ENCODE measurements at regions of chr6 and their contacts with region 1.

Region 1: GRCh38 chr6:149863697-149864577 is at the start of gene LRP11:
- DNase-seq: peak; percentile 93
- H3K4me3 ChIP-seq: peak within 1 kb of the TSS; percentile 74 to 75
- H3K27ac ChIP-seq: peak within 1 kb of the TSS; percentile 76 to 91
- H3K4me1 ChIP-seq: peaks cover 10 to 14% of the 10 kb centered on the region in 2 experiments; a peak in 2 of 4 replicates
- H3K27me3 ChIP-seq: no peaks in the 10 kb centered on the region
- CTCF ChIP-seq: no peak
- EP300 ChIP-seq: no peak
- RAD21 ChIP-seq: no peak
- polyA plus RNA-seq, gene LRP11: 25.0 and 29.5 TPM in 2 replicates

Region 2: GRCh38 chr6:149834513-149835481 is 29.1 kb before region 1 on chr6:
- CTCF ChIA-PET with region 1: interaction called, 34 read pairs
- POLR2A ChIA-PET with region 1: no interaction called
- DNase-seq: peak; percentile 62
- H3K4me3 ChIP-seq: peak overlapping the region in 1 of 2 experiments; percentile 9; a peak in 1 of 4 replicates
- H3K27ac ChIP-seq: no peak overlapping the region
- H3K4me1 ChIP-seq: peaks cover 0 to 3% of the 10 kb centered on the region in 2 experiments; a peak in 2 of 4 replicates
- H3K27me3 ChIP-seq: no peaks in the 10 kb centered on the region
- CTCF ChIP-seq: peak; percentile 90
- EP300 ChIP-seq: no peak
- RAD21 ChIP-seq: peak; percentile 93

Region 3: DNA sequence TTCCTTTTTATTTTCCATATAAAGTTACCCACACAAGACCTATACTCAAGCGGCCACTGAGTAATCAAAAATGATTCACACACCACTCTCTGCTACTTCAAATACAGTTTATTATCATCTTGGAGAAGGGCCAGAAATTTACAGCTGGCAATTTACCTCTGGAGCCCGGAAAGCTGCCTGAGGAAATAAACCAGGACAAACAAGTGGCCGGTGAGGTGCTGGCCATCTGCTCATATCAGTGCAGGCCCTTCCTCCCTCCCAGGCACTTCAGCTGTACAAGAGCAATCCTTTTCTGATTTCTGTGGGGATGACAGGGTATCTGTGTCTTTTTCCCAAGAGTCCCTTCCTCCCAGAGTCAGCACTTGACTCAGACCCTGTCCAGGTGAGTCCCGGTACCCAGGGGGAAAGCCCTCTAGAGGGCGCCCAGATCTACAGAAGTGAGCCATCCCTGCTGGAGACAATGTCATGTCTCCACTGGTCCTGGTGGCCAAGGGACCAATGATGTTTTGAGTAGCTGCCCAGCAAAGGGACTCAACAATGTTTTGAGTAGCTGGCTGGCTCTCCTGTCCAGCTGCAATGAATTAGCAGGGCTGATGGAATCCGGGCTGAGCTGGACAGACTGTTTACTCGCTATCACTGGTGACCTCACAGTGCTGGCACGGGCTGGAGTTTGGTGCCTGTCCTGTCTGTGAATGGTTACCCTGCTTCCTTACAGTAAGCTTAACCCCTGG is 23.4 kb before region 1 on chr6:
- CTCF ChIA-PET with region 1: interaction called, 34 read pairs
- POLR2A ChIA-PET with region 1: interaction called, 8 read pairs
- DNase-seq: peak; percentile 76
- H3K4me3 ChIP-seq: no peak overlapping the region
- H3K27ac ChIP-seq: peak overlapping the region; percentile 56 to 92
- H3K4me1 ChIP-seq: peaks cover 15 to 42% of the 10 kb centered on the region in 2 experiments; a peak in 3 of 4 replicates
- H3K27me3 ChIP-seq: no peaks in the 10 kb centered on the region
- CTCF ChIP-seq: peak; percentile 64
- EP300 ChIP-seq: peak; percentile 28 to 50; a peak in 3 of 4 replicates
- RAD21 ChIP-seq: peak; percentile 56

Region 4: GRCh38 chr6:149847936-149848267 is 16.0 kb before region 1 on chr6:
- CTCF ChIA-PET with region 1: interaction called, 13 read pairs
- POLR2A ChIA-PET with region 1: interaction called, 4 read pairs
- DNase-seq: no peak
- H3K4me3 ChIP-seq: no peak overlapping the region
- H3K27ac ChIP-seq: peak overlapping the region; percentile 53 to 90
- H3K4me1 ChIP-seq: peaks cover 41 to 59% of the 10 kb centered on the region in 2 experiments
- H3K27me3 ChIP-seq: no peaks in the 10 kb centered on the region
- CTCF ChIP-seq: no peak
- EP300 ChIP-seq: no peak
- RAD21 ChIP-seq: no peak

Region 5: DNA sequence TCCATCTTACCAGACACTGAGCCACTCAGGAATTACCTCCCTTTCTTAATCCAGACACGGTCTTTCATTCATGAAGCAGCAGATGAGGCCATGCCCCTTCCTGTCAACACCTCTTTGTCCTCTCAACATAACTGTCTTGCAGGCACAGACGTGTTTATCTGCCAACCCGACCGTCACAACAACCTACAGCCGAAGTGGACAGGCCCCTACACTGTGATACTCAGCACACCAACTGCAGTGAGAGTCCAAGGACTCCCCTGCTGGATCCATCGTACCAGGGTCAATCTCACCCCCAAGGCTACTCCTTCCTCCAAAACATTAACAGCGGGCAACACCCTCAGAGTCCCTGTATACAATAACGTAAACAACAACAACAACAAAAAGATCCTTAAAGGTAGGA is 235.6 kb after region 1 on chr6:
- CTCF ChIA-PET with region 1: no interaction called
- POLR2A ChIA-PET with region 1: no interaction called
- DNase-seq: no peak
- H3K4me3 ChIP-seq: no peak overlapping the region
- H3K27ac ChIP-seq: no peak overlapping the region
- H3K4me1 ChIP-seq: no peaks in the 10 kb centered on the region
- H3K27me3 ChIP-seq: peaks cover 32% of the 10 kb centered on the region; the same call in 1 of the 2 replicates
- CTCF ChIP-seq: no peak
- EP300 ChIP-seq: no peak
- RAD21 ChIP-seq: no peak